ENCODE measurements at regions of chr3 and their contacts with region 1.

Region 1: DNA sequence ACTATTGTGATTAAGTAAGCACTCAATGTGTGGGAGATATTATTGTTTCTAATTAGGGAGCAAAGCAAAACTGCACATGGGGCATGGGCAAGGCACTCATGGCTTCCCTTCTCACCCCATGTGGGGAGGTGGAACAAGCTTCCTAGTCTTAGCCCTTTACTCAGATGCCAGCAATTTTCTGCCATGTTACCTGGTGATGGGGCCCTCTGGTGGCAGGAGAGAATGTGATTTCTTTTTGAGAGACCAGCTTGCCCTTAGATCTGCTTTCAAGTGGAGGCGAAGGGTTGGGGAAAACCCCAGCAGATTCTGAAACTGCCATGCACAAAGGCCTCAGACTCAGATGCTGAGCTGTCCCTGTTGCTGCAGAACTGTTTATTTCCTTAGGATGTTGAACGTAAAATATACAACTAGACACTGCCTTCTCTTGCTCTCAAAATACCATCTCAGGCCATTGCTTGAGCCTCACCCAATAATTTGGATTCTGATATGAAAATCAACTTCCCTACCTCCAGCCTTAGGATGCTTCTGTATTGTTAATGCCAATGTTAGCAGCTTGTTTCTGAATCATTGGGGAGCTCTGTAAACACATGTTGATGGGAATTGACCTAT is 130.2 kb upstream of the TPRG1 start:
- DNase-seq: peak; percentile 75
- H3K4me3 Mint-ChIP-seq: no peak overlapping the region
- H3K27ac Mint-ChIP-seq: no peak overlapping the region
- H3K4me1 Mint-ChIP-seq: peaks cover 56% of the 10 kb centered on the region
- H3K27me3 Mint-ChIP-seq: peaks cover 4% of the 10 kb centered on the region

Region 2: GRCh38 chr3:188584162-188584529 is 457.4 kb before region 1 on chr3:
- intact Hi-C with region 1: loop called (anchors 5 kb)
- DNase-seq: no peak
- H3K4me3 Mint-ChIP-seq: no peak overlapping the region
- H3K27ac Mint-ChIP-seq: no peak overlapping the region
- H3K4me1 Mint-ChIP-seq: no peaks in the 10 kb centered on the region
- H3K27me3 Mint-ChIP-seq: no peaks in the 10 kb centered on the region

Region 3: DNA sequence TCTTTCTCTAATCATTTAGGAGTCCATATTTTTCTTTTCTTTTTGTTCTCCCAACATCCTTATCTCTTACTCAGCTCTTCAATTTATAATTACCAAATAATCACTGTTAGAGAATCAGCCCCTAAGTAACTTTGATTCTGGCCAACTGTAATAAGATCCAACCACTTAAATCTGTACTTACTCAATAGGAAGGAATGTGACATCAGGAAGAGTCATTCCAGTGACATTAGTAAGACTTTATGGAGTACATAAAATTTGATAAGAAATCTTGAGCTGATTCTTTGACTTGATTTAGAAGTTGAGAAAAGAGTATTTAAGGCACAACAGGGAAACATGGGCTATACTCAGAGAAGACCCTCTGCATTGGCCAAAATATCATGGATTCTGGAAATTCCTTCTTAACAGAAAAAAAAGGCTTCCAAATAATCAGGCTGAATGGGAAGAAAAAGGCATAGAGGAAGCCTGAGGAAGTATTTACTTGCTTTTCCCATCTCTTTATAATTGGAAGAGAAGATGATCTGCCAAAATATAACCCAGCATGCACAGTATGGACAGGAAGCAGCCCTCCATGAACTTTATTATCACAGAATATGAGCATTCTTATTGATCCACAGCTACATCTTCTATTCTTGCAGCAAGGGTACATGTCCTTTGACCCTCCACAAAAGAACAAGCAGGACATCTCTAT is 159.5 kb before region 1 on chr3:
- intact Hi-C with region 1: no loop called
- DNase-seq: no peak
- H3K4me3 Mint-ChIP-seq: no peak overlapping the region
- H3K27ac Mint-ChIP-seq: no peak overlapping the region
- H3K4me1 Mint-ChIP-seq: no peaks in the 10 kb centered on the region
- H3K27me3 Mint-ChIP-seq: peaks cover 1% of the 10 kb centered on the region

Region 4: GRCh38 chr3:189013224-189013888 is 28.2 kb before region 1 on chr3:
- intact Hi-C with region 1: loop called (anchors 1 kb)
- DNase-seq: no peak
- H3K4me3 Mint-ChIP-seq: no peak overlapping the region
- H3K27ac Mint-ChIP-seq: peak overlapping the region; percentile 27
- H3K4me1 Mint-ChIP-seq: peaks cover 22% of the 10 kb centered on the region
- H3K27me3 Mint-ChIP-seq: peaks cover 23% of the 10 kb centered on the region

Region 5: DNA sequence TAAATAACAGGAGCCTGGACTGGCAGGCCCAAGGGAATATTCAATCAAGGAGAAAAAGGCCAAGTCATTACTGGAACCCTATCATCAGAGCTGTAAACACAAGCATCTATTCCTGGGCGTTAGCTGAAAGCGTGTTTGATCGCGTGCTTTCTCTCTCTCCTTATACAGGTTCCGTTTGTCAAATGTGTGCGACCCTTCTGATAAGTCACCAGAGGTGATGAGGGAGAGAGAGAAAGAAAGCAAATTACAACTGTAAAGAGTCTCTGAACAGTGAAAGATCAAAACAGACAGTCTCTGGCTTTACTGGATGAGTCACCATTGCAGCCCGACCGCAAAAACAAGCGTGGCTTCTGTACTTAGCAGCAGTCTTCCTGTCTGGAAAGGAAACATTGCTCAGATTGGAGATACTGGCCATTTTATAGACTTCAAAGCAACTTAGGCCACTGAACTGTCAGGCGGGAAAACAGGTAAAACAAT is 90.7 kb after region 1 on chr3:
- intact Hi-C with region 1: loop called (anchors 1 kb)
- DNase-seq: peak; percentile 75
- H3K4me3 Mint-ChIP-seq: peak overlapping the region; percentile 69
- H3K27ac Mint-ChIP-seq: peak overlapping the region; percentile 76
- H3K4me1 Mint-ChIP-seq: peaks cover 28% of the 10 kb centered on the region
- H3K27me3 Mint-ChIP-seq: no peaks in the 10 kb centered on the region

Region 6: GRCh38 chr3:189148081-189148507 is 106.5 kb after region 1 on chr3:
- intact Hi-C with region 1: loop called (anchors 1 kb)
- DNase-seq: peak; percentile 43
- H3K4me3 Mint-ChIP-seq: no peak overlapping the region
- H3K27ac Mint-ChIP-seq: no peak overlapping the region
- H3K4me1 Mint-ChIP-seq: peaks cover 47% of the 10 kb centered on the region
- H3K27me3 Mint-ChIP-seq: peaks cover 6% of the 10 kb centered on the region